Transverse colon (tissue), 4 donors: ENCODE measurements at regions of chr10 and their contacts with region 1.

Region 1: GRCh38 chr10:73159038-73159648 is 8.7 kb downstream of the ECD start:
- DNase-seq: peak; percentile 61
- H3K4me3 ChIP-seq: no peak overlapping the region
- H3K27ac ChIP-seq: no peak overlapping the region
- H3K4me1 ChIP-seq: peaks cover 0 to 24% (median 3%) of the 10 kb centered on the region in 4 donors
- H3K27me3 ChIP-seq: no peaks in the 10 kb centered on the region
- CTCF ChIP-seq: peak; percentile 71 to 77 (median 76)
- EP300 ChIP-seq: no peak
- POLR2A ChIP-seq: no peak

Region 2: DNA sequence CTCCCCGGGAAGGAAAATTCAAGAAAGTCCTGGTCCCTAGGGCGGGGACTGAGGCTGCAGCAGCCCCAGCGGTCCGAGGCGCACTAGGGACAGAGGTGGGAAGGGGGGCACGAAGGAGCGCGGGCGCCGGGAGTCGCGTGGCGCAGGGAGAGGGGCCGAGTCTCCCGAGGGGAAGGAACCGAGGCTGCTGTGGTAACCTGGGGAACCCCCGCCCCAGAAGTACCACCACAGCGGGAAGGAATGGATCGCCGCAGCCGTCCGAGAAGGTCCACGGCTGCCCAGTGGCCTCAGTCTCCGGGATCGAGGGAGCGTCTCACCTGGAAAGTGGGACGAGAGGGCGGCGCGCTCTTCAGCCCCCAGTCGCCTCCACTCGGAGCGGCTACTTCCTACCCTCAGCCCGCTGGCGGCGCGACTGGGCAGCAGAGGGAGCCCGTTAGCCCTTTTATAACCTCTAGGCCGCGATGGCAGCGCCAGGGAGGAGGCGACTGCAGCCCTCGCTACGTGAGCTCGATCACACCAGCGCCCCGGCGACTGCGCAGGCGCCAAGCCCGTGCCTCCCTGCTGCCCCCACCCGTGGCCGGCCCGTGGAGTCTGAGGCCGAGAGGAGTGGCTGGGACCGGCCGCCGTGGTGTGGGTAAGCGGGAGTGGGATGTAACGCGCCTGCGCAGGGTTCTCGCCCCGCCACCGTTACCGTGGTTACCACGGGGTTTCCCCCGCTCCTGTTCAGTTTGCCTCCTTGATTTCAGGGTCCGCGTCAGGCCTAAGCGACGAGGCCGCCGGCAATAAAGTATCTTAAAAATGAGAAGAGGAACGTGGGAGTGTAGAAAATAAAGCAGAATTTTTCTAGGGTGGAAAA is 62.5 kb before region 1 on chr10 and contains the start of gene P4HA1:
- in situ Hi-C with region 1: loop called in 3 of 4 experiments (anchors 5 to 10 kb)
- intact Hi-C with region 1: no loop called
- DNase-seq: peak; percentile 99
- H3K4me3 ChIP-seq: peak within 1 kb of the TSS; percentile 68 to 96 (median 84)
- H3K27ac ChIP-seq: peak within 1 kb of the TSS; percentile 90 to 98 (median 96)
- H3K4me1 ChIP-seq: peaks cover 6 to 18% (median 10%) of the 10 kb centered on the region in 4 donors
- H3K27me3 ChIP-seq: no peaks in the 10 kb centered on the region
- CTCF ChIP-seq: peak; percentile 49 to 76 (median 61)
- EP300 ChIP-seq: no peak
- POLR2A ChIP-seq: peak; percentile 97
- total RNA-seq, gene P4HA1: 10.5 to 28.6 (median 14.4) TPM